Activated CD4-positive, alpha-beta memory T cell treated with anti-CD3 and anti-CD28 coated beads for 36 hours (primary cell): ENCODE measurements at regions of chr16 and their contacts with region 1.

Region 1: GRCh38 chr16:77330332-77331042 is 104.3 kb downstream of the ADAMTS18 start:
- DNase-seq: peak; percentile 44
- H3K4me3 Mint-ChIP-seq: no peak overlapping the region
- H3K27ac Mint-ChIP-seq: peak overlapping the region; percentile 48
- H3K4me1 Mint-ChIP-seq: peaks cover 22% of the 10 kb centered on the region
- H3K27me3 Mint-ChIP-seq: peaks cover 17% of the 10 kb centered on the region

Region 2: GRCh38 chr16:77308163-77308561 is 22.3 kb before region 1 on chr16:
- CTCF ChIA-PET with region 1: interaction called, 4 read pairs
- POLR2A ChIA-PET with region 1: interaction called, 4 read pairs
- intact Hi-C with region 1: loop called (anchors 1 kb)
- DNase-seq: no peak
- H3K4me3 Mint-ChIP-seq: no peak overlapping the region
- H3K27ac Mint-ChIP-seq: peak overlapping the region; percentile 72
- H3K4me1 Mint-ChIP-seq: peaks cover 18% of the 10 kb centered on the region
- H3K27me3 Mint-ChIP-seq: peaks cover 14% of the 10 kb centered on the region

Region 3: GRCh38 chr16:77376358-77376757 is 45.9 kb after region 1 on chr16:
- CTCF ChIA-PET with region 1: no interaction called
- POLR2A ChIA-PET with region 1: no interaction called
- intact Hi-C with region 1: no loop called
- DNase-seq: no peak
- H3K4me3 Mint-ChIP-seq: no peak overlapping the region
- H3K27ac Mint-ChIP-seq: no peak overlapping the region
- H3K4me1 Mint-ChIP-seq: no peaks in the 10 kb centered on the region
- H3K27me3 Mint-ChIP-seq: no peaks in the 10 kb centered on the region